ENCODE measurements at regions of chr4 and their contacts with region 1.

Region 1: DNA sequence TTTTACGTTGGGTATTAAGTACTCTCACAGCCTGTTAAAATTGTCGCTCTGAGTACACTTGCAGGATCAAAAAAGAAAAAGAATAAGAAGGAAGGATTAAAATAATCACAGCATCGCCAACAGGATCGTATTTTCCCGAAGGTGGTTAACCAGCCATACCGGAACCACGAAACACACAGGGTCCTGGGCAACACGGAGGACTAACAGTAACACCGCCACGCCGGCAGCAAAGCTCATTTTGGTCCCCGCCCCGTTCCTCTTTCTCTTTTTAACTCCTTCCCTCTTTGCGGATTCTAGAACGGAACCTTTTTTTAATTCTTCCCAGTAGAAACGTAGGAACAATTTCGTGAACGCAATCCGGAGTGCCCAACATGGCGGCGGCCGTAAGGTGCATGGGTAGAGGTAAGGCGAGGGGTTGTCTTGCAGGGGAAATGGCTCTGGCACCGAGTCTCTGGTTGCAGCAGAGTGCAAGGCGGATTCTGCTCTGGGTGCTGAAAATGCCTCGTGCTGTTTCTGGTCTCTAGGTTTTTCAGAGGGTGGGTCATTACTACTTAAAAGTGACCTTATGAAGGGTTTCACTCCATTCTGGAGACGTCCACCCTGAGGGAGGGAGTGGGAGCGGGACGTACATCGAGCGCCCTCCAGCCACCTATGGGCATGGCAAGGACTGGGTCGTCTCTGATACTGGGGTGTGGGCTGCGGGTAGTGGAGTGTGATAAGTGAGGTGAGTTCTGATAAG is at the start of gene MRPL1:
- DNase-seq: peak; percentile 91
- H3K4me3 Mint-ChIP-seq: peak within 1 kb of the TSS; percentile 91
- H3K27ac Mint-ChIP-seq: peak within 1 kb of the TSS; percentile 100
- H3K4me1 Mint-ChIP-seq: peaks cover 58% of the 10 kb centered on the region
- H3K27me3 Mint-ChIP-seq: peaks cover 4% of the 10 kb centered on the region
- total RNA-seq, gene MRPL1: 37.5 to 39.8 TPM

Region 2: GRCh38 chr4:76626686-76627465 is 1235.8 kb before region 1 on chr4:
- CTCF ChIA-PET with region 1: no interaction called
- intact Hi-C with region 1: no loop called
- DNase-seq: no peak
- H3K4me3 Mint-ChIP-seq: no peak overlapping the region
- H3K27ac Mint-ChIP-seq: no peak overlapping the region
- H3K4me1 Mint-ChIP-seq: no peaks in the 10 kb centered on the region
- H3K27me3 Mint-ChIP-seq: peaks cover 27% of the 10 kb centered on the region

Region 3: DNA sequence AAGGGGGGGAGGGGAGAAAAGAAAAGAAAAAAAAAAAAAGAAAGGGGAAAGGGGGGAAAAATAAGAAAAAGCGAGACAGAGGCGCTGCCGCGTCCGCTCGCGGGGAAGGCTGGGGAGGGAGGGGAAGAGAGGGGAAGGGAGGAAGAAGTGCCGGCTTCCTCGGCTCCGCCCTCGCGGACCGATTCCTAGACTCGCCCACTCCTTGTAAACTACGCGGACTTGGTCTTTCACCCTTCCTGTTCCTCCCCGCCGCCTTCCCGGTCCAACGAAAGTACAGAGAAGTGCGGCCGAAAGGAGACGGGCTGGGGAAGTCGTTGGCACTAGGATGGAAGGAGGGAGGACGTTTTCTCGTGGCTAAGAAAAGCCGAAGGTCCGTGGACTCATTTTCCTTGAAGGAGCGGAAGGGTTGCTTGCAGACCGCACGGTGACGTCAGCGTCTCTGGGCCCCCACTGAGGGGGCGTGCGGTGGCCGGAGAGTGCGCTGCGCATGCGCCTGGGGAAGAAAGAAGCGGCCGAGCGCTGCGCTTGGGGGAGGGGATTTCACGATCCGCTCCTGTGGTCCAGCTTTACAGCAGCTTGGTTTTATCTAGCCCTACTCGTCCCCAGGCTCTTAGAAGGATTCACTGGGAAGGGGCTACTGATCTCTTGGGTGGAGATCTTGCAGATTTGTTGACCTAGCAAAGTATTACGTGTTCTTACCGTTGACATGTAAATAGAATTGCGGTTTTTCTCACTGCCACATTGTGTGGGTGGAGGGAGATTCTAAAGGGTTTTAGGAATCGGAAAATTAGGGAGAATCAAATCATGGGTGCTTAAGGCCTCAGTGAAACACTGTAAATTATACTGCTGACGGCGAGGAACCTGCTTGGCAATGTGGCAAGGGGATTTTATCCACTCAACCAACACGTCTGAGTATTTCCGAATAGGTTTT is 786.5 kb before region 1 on chr4 and contains the start of gene CCNI:
- CTCF ChIA-PET with region 1: no interaction called
- intact Hi-C with region 1: loop called (anchors 2 kb)
- DNase-seq: peak; percentile 93
- H3K4me3 Mint-ChIP-seq: peak within 1 kb of the TSS; percentile 99
- H3K27ac Mint-ChIP-seq: peak within 1 kb of the TSS; percentile 100
- H3K4me1 Mint-ChIP-seq: peaks cover 40% of the 10 kb centered on the region
- H3K27me3 Mint-ChIP-seq: no peaks in the 10 kb centered on the region
- total RNA-seq, gene CCNI: 211 to 218 TPM

Region 4: GRCh38 chr4:77538560-77539157 is 324.0 kb before region 1 on chr4:
- CTCF ChIA-PET with region 1: no interaction called
- intact Hi-C with region 1: loop called (anchors 1 kb)
- DNase-seq: no peak
- H3K4me3 Mint-ChIP-seq: no peak overlapping the region
- H3K27ac Mint-ChIP-seq: peak overlapping the region; percentile 44
- H3K4me1 Mint-ChIP-seq: peaks cover 14% of the 10 kb centered on the region
- H3K27me3 Mint-ChIP-seq: peaks cover 54% of the 10 kb centered on the region

Region 5: GRCh38 chr4:77618383-77619122 is 244.1 kb before region 1 on chr4:
- CTCF ChIA-PET with region 1: interaction called, 3 read pairs
- intact Hi-C with region 1: loop called (anchors 1 kb)
- DNase-seq: peak; percentile 81
- H3K4me3 Mint-ChIP-seq: no peak overlapping the region
- H3K27ac Mint-ChIP-seq: no peak overlapping the region
- H3K4me1 Mint-ChIP-seq: peaks cover 2% of the 10 kb centered on the region
- H3K27me3 Mint-ChIP-seq: peaks cover 12% of the 10 kb centered on the region

Region 6: GRCh38 chr4:77734928-77735327 is 127.7 kb before region 1 on chr4:
- CTCF ChIA-PET with region 1: no interaction called
- intact Hi-C with region 1: loop called (anchors 5 kb)
- DNase-seq: peak; percentile 49
- H3K4me3 Mint-ChIP-seq: peak overlapping the region; percentile 33
- H3K27ac Mint-ChIP-seq: peak overlapping the region; percentile 66
- H3K4me1 Mint-ChIP-seq: peaks cover 54% of the 10 kb centered on the region
- H3K27me3 Mint-ChIP-seq: no peaks in the 10 kb centered on the region

Region 7: GRCh38 chr4:77843628-77844027 is 19.0 kb before region 1 on chr4:
- CTCF ChIA-PET with region 1: interaction called, 4 read pairs
- intact Hi-C with region 1: loop called (anchors 1 kb)
- DNase-seq: no peak
- H3K4me3 Mint-ChIP-seq: no peak overlapping the region
- H3K27ac Mint-ChIP-seq: peak overlapping the region; percentile 16
- H3K4me1 Mint-ChIP-seq: peaks cover 22% of the 10 kb centered on the region
- H3K27me3 Mint-ChIP-seq: no peaks in the 10 kb centered on the region

Region 8: GRCh38 chr4:77883476-77883875 is 20.8 kb after region 1 on chr4:
- CTCF ChIA-PET with region 1: no interaction called
- intact Hi-C with region 1: no loop called
- DNase-seq: no peak
- H3K4me3 Mint-ChIP-seq: no peak overlapping the region
- H3K27ac Mint-ChIP-seq: no peak overlapping the region
- H3K4me1 Mint-ChIP-seq: peaks cover 20% of the 10 kb centered on the region
- H3K27me3 Mint-ChIP-seq: no peaks in the 10 kb centered on the region